ENCODE measurements at regions of chr4 and their contacts with region 1.

Region 1: GRCh38 chr4:127732613-127733328 is 2.6 kb downstream of the SLC25A31 start:
- DNase-seq: no peak
- ATAC-seq: peak in 3 of 4 donors; percentile 25 to 42 (median 36)
- H3K4me3 ChIP-seq: no peak overlapping the region
- H3K27ac ChIP-seq: no peak overlapping the region
- H3K4me1 ChIP-seq: no peaks in the 10 kb centered on the region
- H3K27me3 ChIP-seq: no peaks in the 10 kb centered on the region
- CTCF ChIP-seq: peak; percentile 54

Region 2: DNA sequence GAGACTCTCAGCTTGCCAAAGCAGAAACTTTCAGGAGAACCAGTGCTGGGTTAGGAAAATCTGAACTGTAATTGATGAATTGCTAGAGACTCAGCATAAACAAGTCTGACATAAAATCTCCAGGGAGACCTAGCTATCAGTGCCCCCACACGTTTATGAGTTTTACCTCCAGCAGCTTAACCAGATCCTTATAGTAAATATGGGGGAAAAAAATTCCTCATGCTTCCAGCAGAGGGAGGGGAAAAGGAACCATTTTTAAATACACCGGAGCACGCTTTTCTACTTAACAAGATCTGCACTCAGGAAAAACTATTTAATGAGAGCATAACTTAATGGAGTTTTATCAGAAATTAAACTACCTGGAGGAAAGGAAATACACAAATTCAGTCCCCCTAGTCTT is 1140.7 kb before region 1 on chr4:
- intact Hi-C with region 1: no loop called
- DNase-seq: no peak
- ATAC-seq: no peak
- H3K4me3 ChIP-seq: no peak overlapping the region
- H3K27ac ChIP-seq: no peak overlapping the region
- H3K4me1 ChIP-seq: no peaks in the 10 kb centered on the region
- H3K27me3 ChIP-seq: no peaks in the 10 kb centered on the region
- CTCF ChIP-seq: no peak

Region 3: DNA sequence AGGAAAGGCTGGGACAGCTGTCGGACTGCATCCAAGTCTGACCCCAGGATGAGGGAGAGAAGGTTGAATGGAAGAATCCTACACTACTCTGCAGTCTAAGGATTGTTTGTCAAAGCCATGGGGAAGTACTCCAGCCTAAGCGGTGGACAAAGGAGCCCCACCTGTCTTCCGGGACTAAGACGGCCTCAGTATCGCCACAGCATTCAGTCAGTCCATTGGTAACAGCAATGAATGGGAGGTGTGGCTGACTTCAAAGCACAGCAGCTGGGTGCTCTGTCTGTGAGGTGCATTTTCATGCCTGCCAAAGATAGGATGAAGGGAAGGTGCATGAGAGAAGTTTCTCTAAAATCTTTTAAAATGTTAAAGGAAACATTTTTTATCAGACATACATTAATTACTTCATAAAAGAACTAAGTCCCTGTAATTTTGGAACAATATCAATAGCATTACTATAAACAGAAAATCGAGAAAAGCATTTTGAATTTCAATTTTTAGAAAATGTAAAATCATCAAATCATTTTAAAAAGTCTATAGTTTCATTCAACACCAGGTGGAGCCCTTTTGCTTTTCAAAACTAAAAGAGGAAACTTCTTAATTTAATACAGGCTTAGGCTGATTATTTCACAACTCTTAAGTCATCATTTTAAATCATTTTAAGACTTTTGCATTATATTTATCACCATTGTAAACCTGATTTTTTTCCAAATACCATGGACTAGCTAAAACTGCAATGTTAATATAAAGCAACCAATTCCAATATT is 127.6 kb before region 1 on chr4:
- intact Hi-C with region 1: loop called (anchors 1 to 5 kb)
- DNase-seq: no peak
- ATAC-seq: no peak
- H3K4me3 ChIP-seq: no peak overlapping the region
- H3K27ac ChIP-seq: no peak overlapping the region
- H3K4me1 ChIP-seq: no peaks in the 10 kb centered on the region
- H3K27me3 ChIP-seq: no peaks in the 10 kb centered on the region
- CTCF ChIP-seq: peak; percentile 55

Region 4: GRCh38 chr4:127656047-127656680 is 76.6 kb before region 1 on chr4:
- intact Hi-C with region 1: no loop called
- DNase-seq: no peak
- ATAC-seq: no peak
- H3K4me3 ChIP-seq: no peak overlapping the region
- H3K27ac ChIP-seq: no peak overlapping the region
- H3K4me1 ChIP-seq: no peaks in the 10 kb centered on the region
- H3K27me3 ChIP-seq: no peaks in the 10 kb centered on the region
- CTCF ChIP-seq: no peak

Region 5: GRCh38 chr4:129064717-129065116 is 1331.9 kb after region 1 on chr4:
- intact Hi-C with region 1: loop called in 1 of 2 experiments (anchors 5 kb)
- DNase-seq: no peak
- ATAC-seq: no peak
- H3K4me3 ChIP-seq: no peak overlapping the region
- H3K27ac ChIP-seq: no peak overlapping the region
- H3K4me1 ChIP-seq: no peaks in the 10 kb centered on the region
- H3K27me3 ChIP-seq: no peaks in the 10 kb centered on the region
- CTCF ChIP-seq: no peak

Measured in psoas muscle (tissue), 8 donors.